ENCODE measurements at regions of chr11 and their contacts with region 1.

Region 1: GRCh38 chr11:95705485-95706124 is 84.0 kb downstream of the FAM76B start:
- DNase-seq: peak; percentile 84 to 87 (median 85)
- H3K4me3 ChIP-seq: no peak overlapping the region
- H3K4me3 Mint-ChIP-seq: no peak overlapping the region
- H3K27ac ChIP-seq: no peak overlapping the region
- H3K27ac Mint-ChIP-seq: no peak overlapping the region
- H3K4me1 ChIP-seq: peaks cover 48% of the 10 kb centered on the region
- H3K4me1 Mint-ChIP-seq: peaks cover 6 to 10% (median 9%) of the 10 kb centered on the region in 4 donors
- H3K27me3 ChIP-seq: no peaks in the 10 kb centered on the region
- H3K27me3 Mint-ChIP-seq: peaks cover 0 to 3% of the 10 kb centered on the region in 2 donors

Region 2: DNA sequence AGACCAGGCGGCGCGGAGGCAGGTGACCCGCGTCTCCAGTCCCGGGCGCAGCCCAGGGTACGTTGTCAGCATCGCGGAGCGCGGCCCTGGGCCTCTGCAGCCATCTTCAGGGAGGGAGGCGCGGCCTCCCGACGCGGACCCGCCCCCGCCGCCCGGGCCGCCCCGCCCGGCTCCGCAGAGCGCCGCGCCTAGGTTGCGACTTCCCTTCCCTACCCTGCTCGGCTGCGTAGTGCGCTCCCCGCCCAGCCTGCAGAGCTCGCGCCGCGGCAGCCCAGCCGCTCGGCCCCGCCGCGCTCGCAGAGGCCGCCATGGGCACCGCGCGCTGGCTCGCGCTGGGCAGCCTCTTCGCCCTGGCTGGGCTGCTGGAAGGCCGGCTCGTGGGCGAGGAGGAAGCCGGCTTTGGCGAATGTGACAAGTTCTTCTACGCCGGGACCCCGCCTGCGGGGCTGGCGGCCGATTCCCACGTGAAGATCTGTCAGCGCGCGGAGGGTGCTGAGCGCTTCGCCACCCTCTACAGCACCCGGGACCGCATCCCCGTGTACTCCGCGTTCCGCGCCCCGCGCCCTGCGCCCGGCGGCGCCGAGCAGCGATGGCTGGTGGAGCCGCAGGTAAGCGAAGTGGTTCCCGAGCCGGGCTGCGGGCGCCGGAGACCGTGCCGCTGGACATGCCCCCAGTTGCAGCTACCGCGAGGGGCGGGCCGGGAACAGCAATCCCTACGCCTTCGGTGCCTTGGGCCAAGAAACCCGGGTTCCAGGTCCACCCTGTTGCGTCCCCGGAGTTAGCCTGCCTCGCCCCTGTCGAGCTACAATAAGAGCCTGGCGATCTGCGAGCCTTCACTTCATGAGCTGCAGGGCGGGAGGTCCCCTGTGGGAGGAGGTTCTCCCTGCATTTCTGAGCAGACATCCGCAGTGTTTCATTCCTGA is 615.7 kb before region 1 on chr11 and contains the start of gene ENDOD1:
- CTCF ChIA-PET with region 1: interaction called, 3 read pairs
- POLR2A ChIA-PET with region 1: interaction called, 3 read pairs
- intact Hi-C with region 1: loop called (anchors 5 kb)
- DNase-seq: peak; percentile 86 to 89 (median 87)
- H3K4me3 ChIP-seq: peak within 1 kb of the TSS; percentile 45 to 76
- H3K4me3 Mint-ChIP-seq: peak within 1 kb of the TSS; percentile 91 to 96 (median 92)
- H3K27ac ChIP-seq: peak within 1 kb of the TSS; percentile 67
- H3K27ac Mint-ChIP-seq: peak within 1 kb of the TSS; percentile 92 to 99 (median 98)
- H3K4me1 ChIP-seq: peaks cover 43% of the 10 kb centered on the region
- H3K4me1 Mint-ChIP-seq: peaks cover 36 to 55% (median 46%) of the 10 kb centered on the region in 4 donors
- H3K27me3 ChIP-seq: no peaks in the 10 kb centered on the region
- H3K27me3 Mint-ChIP-seq: no peaks in the 10 kb centered on the region
- total RNA-seq, gene ENDOD1: 12.8 to 13.3 TPM

Region 3: DNA sequence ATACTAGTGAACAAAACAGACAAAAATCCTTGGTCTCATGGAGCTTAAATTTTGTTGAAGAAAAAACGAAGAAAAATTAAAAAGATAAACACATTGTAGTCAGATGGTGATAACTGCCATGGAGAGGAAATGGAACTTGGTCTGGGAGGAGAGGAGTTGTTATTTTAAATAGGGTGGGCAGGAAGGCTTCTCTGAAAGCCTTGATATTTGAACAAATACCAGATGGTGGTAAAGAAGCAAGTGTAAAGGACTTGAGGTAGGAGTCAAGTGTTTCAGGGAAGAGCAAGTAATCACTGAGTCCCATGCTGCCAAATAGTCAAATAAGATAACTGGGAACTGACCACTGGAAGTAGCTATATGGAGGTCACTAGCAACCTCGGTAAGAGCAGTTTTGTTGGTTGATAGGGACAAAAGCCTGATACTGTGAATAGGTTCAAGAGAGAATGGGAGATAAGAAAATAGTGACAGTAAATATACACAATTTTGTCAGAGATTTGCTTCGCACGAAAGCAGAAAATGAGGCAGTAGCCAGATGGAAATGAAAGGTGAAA is 529.7 kb before region 1 on chr11:
- CTCF ChIA-PET with region 1: interaction called, 14 read pairs
- POLR2A ChIA-PET with region 1: interaction called, 3 read pairs
- intact Hi-C with region 1: no loop called
- DNase-seq: no peak
- H3K4me3 ChIP-seq: no peak overlapping the region
- H3K4me3 Mint-ChIP-seq: no peak overlapping the region
- H3K27ac ChIP-seq: no peak overlapping the region
- H3K27ac Mint-ChIP-seq: peak overlapping the region in 2 of 7 donors; percentile 3 to 31
- H3K4me1 ChIP-seq: no peaks in the 10 kb centered on the region
- H3K4me1 Mint-ChIP-seq: peaks cover 0 to 2% (median 0%) of the 10 kb centered on the region in 4 donors
- H3K27me3 ChIP-seq: no peaks in the 10 kb centered on the region
- H3K27me3 Mint-ChIP-seq: no peaks in the 10 kb centered on the region

Region 4: GRCh38 chr11:95212609-95213008 is 493.0 kb before region 1 on chr11:
- CTCF ChIA-PET with region 1: interaction called, 15 read pairs
- POLR2A ChIA-PET with region 1: interaction called, 3 read pairs
- intact Hi-C with region 1: no loop called
- DNase-seq: peak in 1 of 5 donors; percentile 13
- H3K4me3 ChIP-seq: no peak overlapping the region
- H3K4me3 Mint-ChIP-seq: no peak overlapping the region
- H3K27ac ChIP-seq: no peak overlapping the region
- H3K27ac Mint-ChIP-seq: no peak overlapping the region
- H3K4me1 ChIP-seq: peaks cover 23% of the 10 kb centered on the region
- H3K4me1 Mint-ChIP-seq: peaks cover 16 to 51% (median 26%) of the 10 kb centered on the region in 4 donors
- H3K27me3 ChIP-seq: no peaks in the 10 kb centered on the region
- H3K27me3 Mint-ChIP-seq: no peaks in the 10 kb centered on the region

Region 5: GRCh38 chr11:95375886-95376285 is 329.7 kb before region 1 on chr11:
- CTCF ChIA-PET with region 1: interaction called, 13 read pairs
- POLR2A ChIA-PET with region 1: no interaction called
- intact Hi-C with region 1: loop called (anchors 10 kb)
- DNase-seq: no peak
- H3K4me3 ChIP-seq: no peak overlapping the region
- H3K4me3 Mint-ChIP-seq: no peak overlapping the region
- H3K27ac ChIP-seq: no peak overlapping the region
- H3K27ac Mint-ChIP-seq: no peak overlapping the region
- H3K4me1 ChIP-seq: no peaks in the 10 kb centered on the region
- H3K4me1 Mint-ChIP-seq: peaks cover 0 to 1% (median 0%) of the 10 kb centered on the region in 4 donors
- H3K27me3 ChIP-seq: no peaks in the 10 kb centered on the region
- H3K27me3 Mint-ChIP-seq: peaks cover 0 to 6% of the 10 kb centered on the region in 2 donors

Region 6: GRCh38 chr11:95674657-95675358 is 30.8 kb before region 1 on chr11:
- CTCF ChIA-PET with region 1: interaction called, 20 read pairs
- POLR2A ChIA-PET with region 1: interaction called, 10 read pairs
- intact Hi-C with region 1: no loop called
- DNase-seq: peak in 1 of 5 donors; percentile 47
- H3K4me3 ChIP-seq: no peak overlapping the region
- H3K4me3 Mint-ChIP-seq: peak overlapping the region in 1 of 8 donors; percentile 22
- H3K27ac ChIP-seq: no peak overlapping the region
- H3K27ac Mint-ChIP-seq: peak overlapping the region in 2 of 7 donors; percentile 5 to 36
- H3K4me1 ChIP-seq: peaks cover 5% of the 10 kb centered on the region
- H3K4me1 Mint-ChIP-seq: peaks cover 1 to 38% (median 22%) of the 10 kb centered on the region in 4 donors
- H3K27me3 ChIP-seq: no peaks in the 10 kb centered on the region
- H3K27me3 Mint-ChIP-seq: no peaks in the 10 kb centered on the region

Region 7: GRCh38 chr11:95715777-95716241 is 10.2 kb after region 1 on chr11:
- CTCF ChIA-PET with region 1: interaction called, 30 read pairs
- POLR2A ChIA-PET with region 1: interaction called, 6 read pairs
- intact Hi-C with region 1: no loop called
- DNase-seq: no peak
- H3K4me3 ChIP-seq: no peak overlapping the region
- H3K4me3 Mint-ChIP-seq: peak overlapping the region in 5 of 8 donors; percentile 4 to 66 (median 38)
- H3K27ac ChIP-seq: no peak overlapping the region
- H3K27ac Mint-ChIP-seq: peak overlapping the region; percentile 21 to 75 (median 35)
- H3K4me1 ChIP-seq: peaks cover 26% of the 10 kb centered on the region
- H3K4me1 Mint-ChIP-seq: peaks cover 26 to 42% (median 34%) of the 10 kb centered on the region in 4 donors
- H3K27me3 ChIP-seq: no peaks in the 10 kb centered on the region
- H3K27me3 Mint-ChIP-seq: peaks cover 7 to 11% of the 10 kb centered on the region in 2 donors

Region 8: DNA sequence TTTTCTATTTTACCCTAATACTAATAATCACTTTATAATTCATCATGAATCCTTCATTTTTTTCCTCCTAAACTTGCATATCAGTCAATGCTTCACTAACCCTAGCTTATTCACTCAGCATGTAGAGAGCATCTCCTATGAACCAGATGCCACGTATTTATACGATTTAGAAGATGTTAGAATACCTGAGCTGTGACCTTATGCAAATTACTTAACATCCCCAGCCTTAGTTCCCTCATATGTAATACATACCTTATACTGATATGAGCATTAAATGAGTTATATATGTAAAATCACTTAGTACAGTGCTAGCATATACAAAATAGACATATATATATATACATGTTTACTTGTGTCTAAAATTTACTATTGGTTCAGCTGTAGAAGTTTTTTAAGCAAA is 74.9 kb after region 1 on chr11:
- CTCF ChIA-PET with region 1: no interaction called
- POLR2A ChIA-PET with region 1: no interaction called
- intact Hi-C with region 1: no loop called
- DNase-seq: no peak
- H3K4me3 ChIP-seq: no peak overlapping the region
- H3K4me3 Mint-ChIP-seq: no peak overlapping the region
- H3K27ac ChIP-seq: no peak overlapping the region
- H3K27ac Mint-ChIP-seq: peak overlapping the region in 2 of 7 donors; percentile 25 to 42
- H3K4me1 ChIP-seq: peaks cover 10% of the 10 kb centered on the region
- H3K4me1 Mint-ChIP-seq: peaks cover 14 to 38% (median 27%) of the 10 kb centered on the region in 4 donors
- H3K27me3 ChIP-seq: no peaks in the 10 kb centered on the region
- H3K27me3 Mint-ChIP-seq: no peaks in the 10 kb centered on the region

Region 9: DNA sequence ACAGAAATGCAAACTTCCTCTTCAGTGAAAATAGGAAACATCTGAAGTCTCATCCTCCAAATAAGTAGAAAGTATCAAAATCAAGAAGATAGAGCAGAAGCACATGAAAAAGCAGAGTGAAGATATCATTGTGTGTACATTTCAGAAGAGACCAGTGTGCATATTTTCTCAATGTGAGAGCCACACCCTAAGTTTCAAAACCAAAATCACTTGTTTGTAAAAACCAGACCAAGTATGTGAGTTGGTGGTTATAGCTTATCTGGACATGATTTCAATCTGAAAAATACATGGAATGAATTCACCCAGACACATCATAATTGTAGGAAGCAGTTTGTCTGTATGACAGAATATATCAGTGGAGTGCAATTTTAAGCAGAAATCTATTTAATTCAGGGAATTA is 1220.3 kb after region 1 on chr11:
- CTCF ChIA-PET with region 1: no interaction called
- POLR2A ChIA-PET with region 1: no interaction called
- intact Hi-C with region 1: no loop called
- DNase-seq: no peak
- H3K4me3 ChIP-seq: no peak overlapping the region
- H3K4me3 Mint-ChIP-seq: peak overlapping the region in 1 of 8 donors; percentile 41
- H3K27ac ChIP-seq: no peak overlapping the region
- H3K27ac Mint-ChIP-seq: no peak overlapping the region
- H3K4me1 ChIP-seq: no peaks in the 10 kb centered on the region
- H3K4me1 Mint-ChIP-seq: no peaks in the 10 kb centered on the region
- H3K27me3 ChIP-seq: no peaks in the 10 kb centered on the region
- H3K27me3 Mint-ChIP-seq: no peaks in the 10 kb centered on the region

Region 10: DNA sequence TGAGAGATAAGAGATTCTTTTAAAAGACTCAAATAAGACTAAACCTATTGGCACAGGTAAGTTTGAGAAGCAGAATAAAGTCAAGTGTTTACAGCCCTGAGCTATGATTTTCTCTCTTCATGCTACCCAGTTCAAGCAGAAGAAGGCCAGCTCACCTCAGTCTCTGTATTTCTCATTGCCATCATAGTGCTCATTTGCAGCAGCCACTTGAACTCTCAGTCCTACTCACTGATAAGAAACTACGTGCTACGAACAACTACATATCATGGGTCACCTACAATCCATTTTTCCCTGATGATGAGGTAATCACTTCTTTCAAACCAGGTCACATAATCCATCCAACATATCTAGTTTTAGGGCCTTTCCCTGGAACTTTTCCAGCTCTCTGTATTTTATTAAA is 1301.7 kb after region 1 on chr11:
- CTCF ChIA-PET with region 1: no interaction called
- POLR2A ChIA-PET with region 1: no interaction called
- intact Hi-C with region 1: no loop called
- DNase-seq: no peak
- H3K4me3 ChIP-seq: no peak overlapping the region
- H3K4me3 Mint-ChIP-seq: no peak overlapping the region
- H3K27ac ChIP-seq: no peak overlapping the region
- H3K27ac Mint-ChIP-seq: no peak overlapping the region
- H3K4me1 ChIP-seq: no peaks in the 10 kb centered on the region
- H3K4me1 Mint-ChIP-seq: no peaks in the 10 kb centered on the region
- H3K27me3 ChIP-seq: no peaks in the 10 kb centered on the region
- H3K27me3 Mint-ChIP-seq: no peaks in the 10 kb centered on the region

Measured in CD4-positive, alpha-beta memory T cell (primary cell).